ENCODE measurements at regions of chr2 and their contacts with region 1.

Region 1: GRCh38 chr2:120312861-120313694 is 32.9 kb upstream of the INHBB start:
- DNase-seq: peak; percentile 31 to 86
- H3K4me3 ChIP-seq: peak overlapping the region in 3 of 4 experiments; percentile 11 to 51 (median 25); a peak in 4 of 8 replicates
- H3K27ac ChIP-seq: no peak overlapping the region
- H3K4me1 ChIP-seq: peaks cover 1 to 3% (median 2%) of the 10 kb centered on the region in 4 experiments; a peak in 5 of 7 replicates
- H3K27me3 ChIP-seq: peaks cover 4 to 55% (median 40%) of the 10 kb centered on the region in 4 experiments
- CTCF ChIP-seq: peak; percentile 85 to 93 (median 87)
- EP300 ChIP-seq: no peak
- POLR2A ChIP-seq: no peak
- RAD21 ChIP-seq: peak; percentile 85 to 87

Region 2: DNA sequence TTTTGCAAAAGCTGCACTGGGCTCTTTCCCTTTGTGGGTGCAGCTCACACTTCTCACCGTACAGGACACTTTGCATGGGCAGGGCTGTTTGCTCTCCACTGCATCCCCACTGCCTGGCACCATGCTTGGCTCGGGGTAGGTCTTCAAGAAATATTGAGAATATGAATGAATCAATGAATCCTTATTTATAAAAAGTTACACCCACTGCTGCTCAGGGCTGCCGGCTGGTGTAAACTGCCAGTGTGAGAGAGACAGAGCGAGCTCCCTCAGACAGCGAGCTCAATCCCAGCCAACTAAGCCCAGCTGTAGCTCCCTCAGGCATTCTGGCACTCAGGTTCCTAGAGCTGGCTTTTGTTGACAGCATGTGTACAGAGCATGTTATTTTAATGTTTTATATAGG is 93.3 kb before region 1 on chr2:
- CTCF ChIA-PET with region 1: interaction called, 12 read pairs
- POLR2A ChIA-PET with region 1: no interaction called
- DNase-seq: no peak
- H3K4me3 ChIP-seq: no peak overlapping the region
- H3K27ac ChIP-seq: no peak overlapping the region
- H3K4me1 ChIP-seq: peaks cover 0 to 7% (median 6%) of the 10 kb centered on the region in 4 experiments; a peak in 5 of 7 replicates
- H3K27me3 ChIP-seq: peaks cover 13 to 27% (median 25%) of the 10 kb centered on the region in 4 experiments
- CTCF ChIP-seq: no peak
- EP300 ChIP-seq: no peak
- POLR2A ChIP-seq: no peak
- RAD21 ChIP-seq: no peak

Region 3: DNA sequence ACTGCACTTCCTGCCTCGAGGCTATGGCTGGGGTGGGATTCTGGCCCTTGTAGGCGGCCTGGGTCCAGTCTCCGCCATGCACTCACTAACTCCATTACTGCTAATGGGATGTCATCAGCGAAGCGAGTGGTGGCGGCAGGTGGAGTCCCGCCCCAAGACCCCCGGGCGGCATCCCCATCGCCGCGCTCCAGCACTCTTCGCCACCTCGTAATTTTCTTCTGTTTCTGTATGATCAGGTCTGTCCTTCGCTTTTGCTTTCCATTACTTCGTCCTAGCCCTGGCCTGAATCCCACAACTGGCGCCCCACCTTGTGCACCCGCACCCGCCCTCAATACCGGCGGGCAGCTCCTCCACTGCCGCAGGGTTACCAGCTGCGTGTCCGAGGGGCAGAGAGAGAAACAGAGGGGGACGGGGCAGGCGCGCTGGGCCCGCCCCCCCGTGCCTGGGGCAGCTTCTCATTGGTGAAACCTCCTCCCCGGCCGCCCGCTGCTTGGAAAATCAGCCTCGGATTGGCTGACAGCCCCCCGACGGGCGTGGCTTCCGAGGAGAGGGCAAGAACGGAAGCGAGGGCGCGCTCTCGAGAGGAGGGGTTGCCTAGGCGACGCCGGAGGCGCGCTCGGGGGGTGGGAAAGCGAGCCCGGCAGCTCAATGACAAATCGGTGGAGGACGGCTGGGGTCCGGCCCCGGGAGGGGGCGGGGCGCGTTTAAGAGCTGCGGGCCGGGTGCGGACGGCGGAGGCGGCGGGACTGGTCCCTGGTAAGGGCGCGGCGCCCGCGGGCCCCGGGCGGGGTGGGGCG is 60.7 kb before region 1 on chr2 and contains the start of gene RALB:
- CTCF ChIA-PET with region 1: interaction called, 27 read pairs
- POLR2A ChIA-PET with region 1: interaction called, 4 read pairs
- DNase-seq: peak; percentile 96 to 99
- H3K4me3 ChIP-seq: peak within 1 kb of the TSS; percentile 70 to 89 (median 86)
- H3K27ac ChIP-seq: no peak within 1 kb of the TSS
- H3K4me1 ChIP-seq: peaks cover 4 to 10% (median 8%) of the 10 kb centered on the region in 4 experiments
- H3K27me3 ChIP-seq: peaks cover 8 to 47% (median 31%) of the 10 kb centered on the region in 4 experiments
- CTCF ChIP-seq: no peak
- EP300 ChIP-seq: no peak
- POLR2A ChIP-seq: 0 out of 3 replicates have a peak, but pooled peaks of 1 of the 2 experiments have one; percentile 23
- RAD21 ChIP-seq: no peak
- total RNA-seq, gene RALB: 16.6 and 18.2 TPM in 2 replicates

Region 4: DNA sequence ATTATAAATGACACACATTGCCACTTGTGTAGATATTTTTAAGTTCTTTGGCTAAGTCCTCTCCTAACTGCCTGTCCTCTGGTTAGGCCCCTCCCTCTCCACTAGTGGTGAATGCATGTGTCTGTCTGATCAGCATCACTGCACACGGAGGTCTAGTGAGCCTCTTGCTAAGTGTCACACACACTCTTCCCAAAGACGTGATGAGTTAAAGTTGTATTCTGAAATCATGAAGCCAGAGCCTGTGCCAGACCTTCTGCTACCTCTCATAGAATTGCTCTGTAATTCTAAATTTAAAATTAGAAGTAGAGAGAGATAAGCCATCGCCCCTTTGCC is 19.1 kb before region 1 on chr2:
- CTCF ChIA-PET with region 1: interaction called, 43 read pairs
- POLR2A ChIA-PET with region 1: no interaction called
- DNase-seq: no peak
- H3K4me3 ChIP-seq: no peak overlapping the region
- H3K27ac ChIP-seq: no peak overlapping the region
- H3K4me1 ChIP-seq: peaks cover 0 to 20% (median 15%) of the 10 kb centered on the region in 4 experiments
- H3K27me3 ChIP-seq: no peaks in the 10 kb centered on the region
- CTCF ChIP-seq: no peak
- EP300 ChIP-seq: no peak
- POLR2A ChIP-seq: no peak
- RAD21 ChIP-seq: no peak

Region 5: DNA sequence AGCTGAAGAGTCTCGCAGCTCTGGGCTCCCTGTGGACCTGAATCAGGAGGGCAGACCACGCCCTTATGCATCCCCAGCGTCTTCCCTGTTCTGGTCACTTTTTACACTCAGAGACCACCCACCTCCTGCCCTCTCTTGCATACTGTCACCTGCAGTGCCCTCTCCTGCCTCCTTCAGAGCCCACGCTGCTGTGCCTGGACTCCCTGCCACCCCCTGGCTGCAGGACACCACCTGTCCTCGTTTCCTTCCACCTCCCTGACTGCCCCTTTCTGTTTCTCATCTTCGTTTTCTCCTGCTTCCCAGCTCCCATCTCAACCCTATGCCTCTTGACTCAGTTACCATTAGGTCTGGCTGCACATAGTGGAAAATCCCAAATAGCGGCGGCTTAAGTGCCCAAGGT is 23.7 kb after region 1 on chr2:
- CTCF ChIA-PET with region 1: interaction called, 12 read pairs
- POLR2A ChIA-PET with region 1: no interaction called
- DNase-seq: no peak
- H3K4me3 ChIP-seq: no peak overlapping the region
- H3K27ac ChIP-seq: no peak overlapping the region
- H3K4me1 ChIP-seq: no peaks in the 10 kb centered on the region; a peak in 1 of 7 replicates
- H3K27me3 ChIP-seq: peaks cover 0 to 11% (median 5%) of the 10 kb centered on the region in 4 experiments; a peak in 5 of 7 replicates
- CTCF ChIP-seq: peak in 2 of 3 experiments; percentile 37 to 38; a peak in 3 of 4 replicates
- EP300 ChIP-seq: no peak
- POLR2A ChIP-seq: no peak
- RAD21 ChIP-seq: peak; percentile 6 to 17; a peak in 2 of 4 replicates

Region 6: GRCh38 chr2:120552800-120553481 is 239.9 kb after region 1 on chr2:
- CTCF ChIA-PET with region 1: interaction called, 11 read pairs
- POLR2A ChIA-PET with region 1: no interaction called
- DNase-seq: peak; percentile 41 to 91
- H3K4me3 ChIP-seq: peak overlapping the region; percentile 31 to 51 (median 37); a peak in 5 of 8 replicates
- H3K27ac ChIP-seq: no peak overlapping the region
- H3K4me1 ChIP-seq: no peaks in the 10 kb centered on the region; a peak in 1 of 7 replicates
- H3K27me3 ChIP-seq: peaks cover 4 to 25% (median 19%) of the 10 kb centered on the region in 4 experiments
- CTCF ChIP-seq: peak; percentile 88 to 94 (median 88)
- EP300 ChIP-seq: no peak
- POLR2A ChIP-seq: no peak
- RAD21 ChIP-seq: peak; percentile 68 to 79

Region 7: DNA sequence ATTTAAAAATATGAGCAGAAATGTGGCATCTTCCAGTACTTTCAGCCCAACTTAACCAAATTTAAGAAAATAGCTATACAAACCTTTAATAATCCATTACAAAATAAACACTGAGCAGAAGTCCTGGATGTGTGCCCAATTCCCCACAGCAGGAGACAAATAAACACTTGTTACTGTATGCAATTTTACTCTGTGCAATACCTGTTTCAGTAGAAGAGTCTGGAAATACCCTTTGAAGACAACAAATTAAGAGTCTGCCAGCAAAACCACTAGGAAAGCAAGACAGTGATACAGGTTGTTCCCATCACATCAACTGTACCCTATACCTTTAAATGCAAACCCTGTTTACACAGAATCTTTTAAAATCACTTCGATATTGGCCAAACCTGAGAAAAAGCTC is 1176.2 kb after region 1 on chr2:
- CTCF ChIA-PET with region 1: no interaction called
- POLR2A ChIA-PET with region 1: no interaction called
- DNase-seq: no peak
- H3K4me3 ChIP-seq: no peak overlapping the region
- H3K27ac ChIP-seq: no peak overlapping the region
- H3K4me1 ChIP-seq: peaks cover 0 to 5% (median 4%) of the 10 kb centered on the region in 4 experiments; a peak in 4 of 7 replicates
- H3K27me3 ChIP-seq: no peaks in the 10 kb centered on the region
- CTCF ChIP-seq: no peak
- EP300 ChIP-seq: no peak
- POLR2A ChIP-seq: no peak
- RAD21 ChIP-seq: no peak

Measured in H1 (cell line).